ENCODE measurements at regions of chr11 and their contacts with region 1.

Region 1: GRCh38 chr11:16785520-16786128 is 47.2 kb downstream of the C11orf58 start:
- DNase-seq: peak; percentile 75 to 78 (median 76)
- ATAC-seq: peak; percentile 85
- H3K4me3 ChIP-seq: no peak overlapping the region
- H3K27ac ChIP-seq: no peak overlapping the region
- H3K4me1 ChIP-seq: peaks cover 0 to 6% of the 10 kb centered on the region in 2 experiments; a peak in 1 of 5 replicates
- H3K27me3 ChIP-seq: peaks cover 8 to 30% of the 10 kb centered on the region in 2 experiments; a peak in 4 of 5 replicates
- CTCF ChIP-seq: peak; percentile 83 to 87 (median 85)
- EP300 ChIP-seq: no peak
- POLR2A ChIP-seq: no peak
- RAD21 ChIP-seq: peak; percentile 65 to 80

Region 2: GRCh38 chr11:16806791-16807190 is 21.2 kb after region 1 on chr11:
- CTCF ChIA-PET with region 1: no interaction called
- POLR2A ChIA-PET with region 1: no interaction called
- in situ Hi-C with region 1: no loop called
- intact Hi-C with region 1: no loop called
- DNase-seq: no peak
- ATAC-seq: no peak
- H3K4me3 ChIP-seq: no peak overlapping the region
- H3K27ac ChIP-seq: no peak overlapping the region
- H3K4me1 ChIP-seq: no peaks in the 10 kb centered on the region; a peak in 1 of 5 replicates
- H3K27me3 ChIP-seq: peaks cover 60 to 67% of the 10 kb centered on the region in 2 experiments
- CTCF ChIP-seq: no peak
- EP300 ChIP-seq: no peak
- POLR2A ChIP-seq: no peak
- RAD21 ChIP-seq: no peak

Region 3: DNA sequence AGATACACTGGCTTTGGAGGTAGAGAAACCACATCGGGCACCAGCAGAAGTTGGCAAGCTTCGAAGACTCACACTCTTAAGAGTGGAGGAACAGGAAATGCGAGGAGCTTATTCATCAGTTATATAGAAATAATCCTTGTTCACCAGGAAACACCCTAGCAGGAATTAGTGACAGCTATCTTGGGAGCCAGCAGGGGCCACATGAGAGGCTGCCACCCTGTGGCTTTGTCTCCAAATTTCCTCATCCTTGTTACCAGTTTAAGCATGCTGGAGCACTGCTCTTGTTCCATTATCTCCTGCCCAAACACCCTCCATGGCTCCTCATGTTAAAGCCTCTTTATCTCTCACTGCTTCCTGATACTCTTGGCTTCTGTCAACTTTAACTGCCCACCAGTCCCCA is 97.5 kb after region 1 on chr11:
- CTCF ChIA-PET with region 1: interaction called, 5 read pairs
- POLR2A ChIA-PET with region 1: no interaction called
- in situ Hi-C with region 1: no loop called
- intact Hi-C with region 1: loop called (anchors 1 kb)
- DNase-seq: peak; percentile 24 to 75 (median 46)
- ATAC-seq: peak; percentile 91
- H3K4me3 ChIP-seq: no peak overlapping the region
- H3K27ac ChIP-seq: no peak overlapping the region
- H3K4me1 ChIP-seq: peaks cover 0 to 6% of the 10 kb centered on the region in 2 experiments; a peak in 2 of 5 replicates
- H3K27me3 ChIP-seq: peaks cover 14 to 28% of the 10 kb centered on the region in 2 experiments
- CTCF ChIP-seq: peak; percentile 59 to 73 (median 60)
- EP300 ChIP-seq: no peak
- POLR2A ChIP-seq: no peak
- RAD21 ChIP-seq: peak in 1 of 2 experiments; percentile 83; a peak in 3 of 4 replicates

Region 4: GRCh38 chr11:16935518-16936302 is 150.1 kb after region 1 on chr11:
- CTCF ChIA-PET with region 1: no interaction called
- POLR2A ChIA-PET with region 1: no interaction called
- in situ Hi-C with region 1: no loop called
- intact Hi-C with region 1: loop called (anchors 1 kb)
- DNase-seq: peak in 2 of 4 experiments; percentile 33 to 45
- ATAC-seq: peak; percentile 72; the same call in 2 of the 3 replicates
- H3K4me3 ChIP-seq: no peak overlapping the region
- H3K27ac ChIP-seq: no peak overlapping the region
- H3K4me1 ChIP-seq: no peaks in the 10 kb centered on the region
- H3K27me3 ChIP-seq: peaks cover 9 to 25% of the 10 kb centered on the region in 2 experiments; a peak in 3 of 5 replicates
- CTCF ChIP-seq: peak; percentile 65 to 74 (median 71); a peak in 5 of 6 replicates
- EP300 ChIP-seq: no peak
- POLR2A ChIP-seq: no peak
- RAD21 ChIP-seq: peak; percentile 42 to 62; a peak in 3 of 4 replicates

Region 5: DNA sequence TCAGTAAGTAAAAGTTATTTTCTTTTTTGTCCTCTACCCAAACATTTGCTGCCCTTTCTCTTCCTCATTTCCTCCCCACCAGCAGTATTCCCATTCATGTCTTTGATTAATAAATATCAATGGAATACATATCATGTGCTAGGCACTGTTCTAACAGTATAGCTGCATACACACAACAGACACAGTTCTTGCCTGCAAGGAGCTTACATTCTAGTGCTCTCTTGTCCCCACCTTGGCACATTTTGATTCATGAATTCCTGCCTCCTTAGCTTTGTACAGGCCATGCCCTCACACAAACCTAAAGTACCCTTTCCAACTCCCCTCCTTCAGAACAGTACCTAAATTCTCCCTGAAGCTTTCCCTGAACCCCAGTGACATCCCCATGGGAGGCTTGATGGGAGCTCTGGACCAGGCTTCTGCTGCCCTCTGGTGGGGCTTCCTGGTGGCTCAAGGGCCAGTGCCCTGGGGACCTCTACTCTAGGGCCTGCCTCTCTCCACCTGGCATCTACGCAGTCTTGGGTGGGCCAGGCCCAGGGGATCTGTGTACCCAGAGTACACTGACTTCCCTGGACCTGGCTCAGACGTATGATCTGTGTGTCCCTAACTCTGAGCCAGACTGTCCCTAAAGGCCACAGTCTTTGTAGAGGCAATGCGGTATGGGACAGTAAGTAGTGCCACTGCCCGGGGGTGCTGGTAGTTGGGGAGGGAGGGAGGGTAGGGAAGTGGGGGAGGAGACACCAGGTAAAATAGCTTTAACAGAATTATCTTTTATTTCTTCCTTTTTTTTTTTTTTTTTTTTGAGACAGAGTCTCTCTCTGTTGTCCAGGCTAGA is 277.8 kb after region 1 on chr11:
- CTCF ChIA-PET with region 1: interaction called, 3 read pairs
- POLR2A ChIA-PET with region 1: no interaction called
- in situ Hi-C with region 1: loop called (anchors 10 kb)
- intact Hi-C with region 1: loop called (anchors 2 kb)
- DNase-seq: peak; percentile 58 to 64 (median 60)
- ATAC-seq: peak; percentile 97
- H3K4me3 ChIP-seq: no peak overlapping the region
- H3K27ac ChIP-seq: no peak overlapping the region
- H3K4me1 ChIP-seq: no peaks in the 10 kb centered on the region
- H3K27me3 ChIP-seq: no peaks in the 10 kb centered on the region
- CTCF ChIP-seq: peak; percentile 70 to 80 (median 73)
- EP300 ChIP-seq: no peak
- POLR2A ChIP-seq: no peak
- RAD21 ChIP-seq: peak; percentile 78 to 91